PC-9 (cell line): ENCODE measurements at regions of chr19 and their contacts with region 1.

Region 1: DNA sequence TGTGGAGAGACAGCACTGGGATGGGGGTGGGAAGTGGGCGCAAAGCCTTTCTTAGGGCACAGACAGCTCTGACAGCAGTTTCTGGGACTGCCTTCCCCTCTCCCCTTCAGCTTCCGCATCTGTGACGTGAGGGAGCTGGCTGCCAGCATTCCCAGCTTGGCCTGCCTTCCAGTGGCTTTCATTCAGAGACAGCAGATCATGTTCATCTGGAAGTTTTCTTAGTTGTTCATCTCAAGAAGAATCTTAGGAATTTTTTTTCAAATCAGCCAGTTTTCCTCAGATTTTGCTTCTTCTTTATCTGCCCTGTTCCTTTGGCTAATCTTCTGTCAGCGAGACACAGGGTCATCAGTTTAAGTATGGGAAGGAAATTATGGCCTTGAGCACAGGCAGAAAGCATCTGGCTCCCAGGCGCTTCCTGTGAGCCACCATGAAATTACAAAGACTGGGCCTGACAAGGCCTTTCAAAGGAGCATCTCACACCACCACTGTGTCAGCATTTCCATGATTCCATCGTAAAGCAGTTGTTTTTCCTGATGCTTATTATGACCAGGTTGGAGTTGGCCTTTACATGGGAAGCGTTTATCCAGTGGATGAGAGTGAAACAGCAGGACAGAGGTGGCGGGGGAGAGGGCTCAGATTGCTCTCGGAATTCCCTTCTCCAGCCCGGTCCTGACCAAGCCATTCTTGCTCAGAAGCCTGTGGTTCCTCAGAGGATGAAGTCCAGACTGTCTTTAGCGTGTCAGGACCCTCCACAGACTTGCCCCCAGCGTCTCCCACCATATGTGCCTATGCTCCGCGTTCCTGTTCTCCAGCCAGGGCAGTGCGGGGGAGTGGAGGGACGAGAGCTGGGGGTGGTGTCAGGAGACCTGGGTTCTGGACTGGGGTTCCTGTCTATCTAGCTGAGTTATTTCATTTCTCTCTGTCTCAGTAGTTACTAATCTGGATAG is 43.6 kb downstream of the ARHGAP35 start:
- DNase-seq: no peak
- H3K4me3 ChIP-seq: 0 out of 2 replicates have a peak overlapping the region, but pooled peaks have one; percentile 32
- H3K27ac ChIP-seq: peak overlapping the region; percentile 95
- H3K4me1 ChIP-seq: peaks cover 62% of the 10 kb centered on the region
- H3K27me3 ChIP-seq: no peaks in the 10 kb centered on the region
- CTCF ChIP-seq: no peak

Region 2: GRCh38 chr19:46030812-46031550 is 873.4 kb before region 1 on chr19:
- CTCF ChIA-PET with region 1: no interaction called
- POLR2A ChIA-PET with region 1: no interaction called
- intact Hi-C with region 1: no loop called
- DNase-seq: no peak
- H3K4me3 ChIP-seq: no peak overlapping the region
- H3K27ac ChIP-seq: no peak overlapping the region
- H3K4me1 ChIP-seq: no peaks in the 10 kb centered on the region; the same call in 1 of the 2 replicates
- H3K27me3 ChIP-seq: no peaks in the 10 kb centered on the region
- CTCF ChIP-seq: no peak

Region 3: DNA sequence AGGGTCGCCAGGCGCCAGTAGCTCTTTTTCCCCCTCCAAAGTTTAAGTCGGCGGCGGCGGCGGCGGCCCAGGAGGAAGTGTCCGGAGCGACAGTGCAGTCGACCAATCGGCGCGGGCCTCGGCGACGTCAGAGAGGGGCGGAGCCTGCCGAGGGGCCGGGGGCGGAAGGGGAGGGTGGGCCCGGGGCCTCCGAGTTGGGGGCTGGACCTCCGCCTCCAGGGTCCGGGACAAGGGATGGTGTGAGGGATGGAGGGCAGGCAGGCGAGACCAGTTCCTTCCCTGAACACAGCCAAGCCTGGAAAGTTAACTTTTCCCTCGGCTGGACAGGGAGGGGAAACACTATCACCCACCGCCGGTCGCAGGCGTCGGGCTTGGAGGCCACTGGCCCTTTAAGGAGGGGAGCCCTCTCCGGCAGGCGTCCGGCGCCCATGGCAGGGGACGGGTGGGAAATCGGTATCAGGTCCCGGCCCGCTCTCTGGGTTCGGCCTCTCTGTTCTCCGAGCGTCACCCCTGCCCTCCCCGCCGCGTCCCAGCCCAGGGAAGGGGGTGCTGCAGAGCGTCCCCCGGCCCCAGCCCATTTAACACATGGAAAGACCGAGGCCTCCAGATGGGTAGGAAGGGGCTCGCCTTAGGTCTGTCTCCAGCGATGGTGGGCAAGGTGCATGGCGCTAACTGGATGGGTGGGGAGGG is 187.2 kb before region 1 on chr19 and contains the start of gene PRKD2:
- CTCF ChIA-PET with region 1: no interaction called
- POLR2A ChIA-PET with region 1: interaction called, 10 read pairs
- intact Hi-C with region 1: no loop called
- DNase-seq: peak; percentile 66 to 87
- H3K4me3 ChIP-seq: peak within 1 kb of the TSS; percentile 76
- H3K27ac ChIP-seq: 0 out of 2 replicates have a peak within 1 kb of the TSS, but pooled peaks have one; percentile 69
- H3K4me1 ChIP-seq: peaks cover 27% of the 10 kb centered on the region
- H3K27me3 ChIP-seq: no peaks in the 10 kb centered on the region
- CTCF ChIP-seq: no peak
- total RNA-seq, gene PRKD2: 88.5 and 97.8 TPM in 2 replicates

Region 4: DNA sequence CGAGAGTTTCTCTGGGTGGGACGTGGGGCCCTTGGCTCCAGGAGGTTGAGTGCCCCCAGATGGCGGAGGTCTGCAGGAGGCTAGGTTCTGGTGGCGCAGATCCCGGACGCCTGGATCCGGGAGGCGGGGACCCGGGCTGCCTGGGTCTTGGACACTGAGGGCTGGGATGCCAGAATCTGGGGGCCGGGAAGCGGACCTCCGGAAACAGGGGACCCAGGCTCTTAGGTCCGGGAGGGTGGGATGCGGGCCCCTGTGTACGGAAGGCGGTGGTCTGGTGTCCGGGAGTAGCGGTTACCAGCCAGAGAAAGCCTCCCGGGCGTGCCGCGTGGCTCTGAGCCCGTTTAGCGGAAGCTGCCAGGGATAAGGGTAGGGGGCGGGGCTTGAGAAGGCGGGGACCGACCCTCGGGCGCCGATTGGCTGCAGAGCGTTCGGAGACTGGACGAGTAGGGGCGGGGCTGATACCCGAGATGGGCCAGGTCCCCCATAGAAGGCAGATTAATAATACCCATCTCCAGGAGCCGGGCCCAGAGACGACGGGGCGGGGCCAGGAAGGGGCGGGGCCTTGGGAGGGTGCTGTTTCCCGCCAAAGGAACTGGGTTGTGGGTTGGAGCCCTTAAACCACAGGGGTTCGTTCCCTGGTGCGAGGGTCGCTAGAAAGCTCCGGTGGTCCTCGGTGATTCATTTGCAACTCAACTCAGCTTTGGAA is 116.0 kb before region 1 on chr19 and contains the start of gene SLC1A5:
- CTCF ChIA-PET with region 1: no interaction called
- POLR2A ChIA-PET with region 1: no interaction called
- intact Hi-C with region 1: loop called (anchors 5 kb)
- DNase-seq: peak; percentile 94 to 98
- H3K4me3 ChIP-seq: peak within 1 kb of the TSS; percentile 98
- H3K27ac ChIP-seq: peak within 1 kb of the TSS; percentile 92
- H3K4me1 ChIP-seq: peaks cover 40% of the 10 kb centered on the region
- H3K27me3 ChIP-seq: no peaks in the 10 kb centered on the region
- CTCF ChIP-seq: no peak
- total RNA-seq, gene SLC1A5: 218 and 264 TPM in 2 replicates

Region 5: GRCh38 chr19:46924874-46925547 is 20.6 kb after region 1 on chr19:
- CTCF ChIA-PET with region 1: no interaction called
- POLR2A ChIA-PET with region 1: interaction called, 6 read pairs
- intact Hi-C with region 1: loop called (anchors 1 kb)
- DNase-seq: peak; percentile 66 to 98
- H3K4me3 ChIP-seq: peak overlapping the region; percentile 50
- H3K27ac ChIP-seq: peak overlapping the region; percentile 95
- H3K4me1 ChIP-seq: peaks cover 65% of the 10 kb centered on the region
- H3K27me3 ChIP-seq: no peaks in the 10 kb centered on the region
- CTCF ChIP-seq: 0 out of 2 replicates have a peak, but pooled peaks have one; percentile 8

Region 6: GRCh38 chr19:46975925-46976782 is 71.8 kb after region 1 on chr19:
- CTCF ChIA-PET with region 1: no interaction called
- POLR2A ChIA-PET with region 1: no interaction called
- intact Hi-C with region 1: loop called (anchors 1 kb)
- DNase-seq: peak; percentile 79 to 85
- H3K4me3 ChIP-seq: no peak overlapping the region
- H3K27ac ChIP-seq: peak overlapping the region; percentile 45
- H3K4me1 ChIP-seq: peaks cover 30% of the 10 kb centered on the region
- H3K27me3 ChIP-seq: no peaks in the 10 kb centered on the region
- CTCF ChIP-seq: no peak

Region 7: GRCh38 chr19:47013041-47013517 is 108.7 kb after region 1 on chr19:
- CTCF ChIA-PET with region 1: no interaction called
- POLR2A ChIA-PET with region 1: no interaction called
- intact Hi-C with region 1: no loop called
- DNase-seq: peak; percentile 65 to 88
- H3K4me3 ChIP-seq: peak overlapping the region; percentile 7; the same call in 1 of the 2 replicates
- H3K27ac ChIP-seq: no peak overlapping the region
- H3K4me1 ChIP-seq: peaks cover 6% of the 10 kb centered on the region
- H3K27me3 ChIP-seq: no peaks in the 10 kb centered on the region
- CTCF ChIP-seq: peak; percentile 99

Region 8: DNA sequence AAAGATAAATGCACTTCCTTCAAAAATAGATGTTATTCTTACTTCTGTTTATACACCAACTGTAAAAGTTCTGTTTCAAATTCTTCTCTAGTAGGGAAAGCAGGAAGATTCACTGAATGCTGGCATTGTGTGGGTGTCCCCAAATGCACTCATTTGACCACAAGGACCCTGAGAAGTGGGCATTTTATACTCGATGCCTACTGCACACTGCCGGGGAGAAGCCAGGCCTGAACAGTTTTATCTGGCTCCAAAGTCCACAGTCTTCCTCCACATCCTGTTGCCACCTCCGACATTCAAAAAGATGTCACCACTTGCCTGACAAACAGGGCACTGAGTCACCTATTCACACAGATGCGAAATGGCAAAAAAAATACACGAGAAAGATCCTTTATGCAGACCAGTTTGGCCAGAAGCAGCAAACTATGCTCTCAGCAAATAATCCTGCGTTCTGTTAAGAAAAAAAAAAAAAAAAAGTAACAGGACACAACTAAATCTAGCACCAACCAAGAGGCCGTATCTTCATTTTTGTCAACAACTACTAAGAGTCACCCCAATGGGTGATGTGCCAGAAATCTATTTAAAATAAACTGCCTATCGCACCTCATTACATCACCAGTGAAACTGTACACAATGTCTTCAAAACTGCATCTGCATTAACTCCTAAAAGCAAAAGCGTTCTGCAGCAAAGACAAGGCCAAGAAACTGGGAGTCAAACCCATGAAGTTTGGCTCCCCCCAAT is 203.0 kb after region 1 on chr19:
- CTCF ChIA-PET with region 1: no interaction called
- POLR2A ChIA-PET with region 1: interaction called, 17 read pairs
- intact Hi-C with region 1: no loop called
- DNase-seq: peak; percentile 57 to 94
- H3K4me3 ChIP-seq: peak overlapping the region; percentile 10; the same call in 1 of the 2 replicates
- H3K27ac ChIP-seq: peak overlapping the region; percentile 62
- H3K4me1 ChIP-seq: peaks cover 43% of the 10 kb centered on the region
- H3K27me3 ChIP-seq: no peaks in the 10 kb centered on the region
- CTCF ChIP-seq: no peak

Region 9: GRCh38 chr19:47130591-47131227 is 226.3 kb after region 1 on chr19 and contains the start of gene SAE1:
- CTCF ChIA-PET with region 1: interaction called, 4 read pairs
- POLR2A ChIA-PET with region 1: interaction called, 24 read pairs
- intact Hi-C with region 1: no loop called
- DNase-seq: peak; percentile 96 to 97
- H3K4me3 ChIP-seq: peak within 1 kb of the TSS; percentile 86
- H3K27ac ChIP-seq: peak within 1 kb of the TSS; percentile 30
- H3K4me1 ChIP-seq: peaks cover 40% of the 10 kb centered on the region
- H3K27me3 ChIP-seq: no peaks in the 10 kb centered on the region
- CTCF ChIP-seq: no peak; the same call in 1 of the 2 replicates
- total RNA-seq, gene SAE1: 133 and 148 TPM in 2 replicates